Activated CD4-positive, alpha-beta T cell treated with anti-CD3 and anti-CD28 coated beads, Interleukin-2, amount 10 ng/mL, durations not matched to agents 7 days and 5 days (primary cell): ENCODE measurements at regions of chr19 and their contacts with region 1.

Region 1: DNA sequence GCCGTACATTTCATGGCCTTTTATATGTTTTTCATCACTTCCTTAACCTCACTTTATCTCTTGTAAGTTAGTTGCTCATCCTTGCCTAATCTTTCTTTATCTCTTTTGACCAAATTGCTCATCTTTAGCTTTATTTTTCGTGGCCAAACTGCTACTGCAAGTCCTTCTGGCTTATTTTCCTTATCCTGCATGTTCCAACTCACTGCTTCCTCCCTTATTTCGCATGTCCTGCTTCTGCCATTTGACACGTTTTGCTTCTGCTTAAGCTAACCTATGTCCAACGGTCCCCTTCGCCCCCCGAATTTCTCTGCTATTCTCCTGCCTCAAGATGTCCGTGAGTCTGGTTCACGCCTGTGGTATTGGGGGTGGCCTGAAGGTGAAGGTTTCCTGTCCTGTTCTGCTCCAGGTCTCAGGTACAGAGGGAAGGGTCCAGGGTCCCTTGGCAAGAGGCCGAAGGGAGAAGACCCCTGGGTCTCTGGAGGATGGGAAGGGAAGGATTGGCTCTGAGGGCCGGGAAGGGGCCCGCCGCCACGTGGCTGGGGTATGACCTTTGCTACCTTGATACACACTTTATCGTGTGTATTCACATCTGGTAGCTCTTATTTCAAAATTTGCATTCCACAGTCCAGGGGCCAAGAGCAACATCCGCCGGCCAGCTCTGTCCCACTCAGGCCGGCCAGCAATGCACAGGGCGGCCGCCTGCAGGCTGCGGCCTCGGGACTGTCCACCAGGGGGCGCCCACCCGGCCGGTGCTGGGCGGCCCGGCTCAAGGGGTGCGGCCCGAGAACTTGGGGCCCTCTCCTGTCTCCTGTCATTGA is 2.9 kb upstream of the C19orf85 start:
- DNase-seq: peak; percentile 65
- H3K4me3 Mint-ChIP-seq: no peak overlapping the region
- H3K27ac Mint-ChIP-seq: peak overlapping the region; percentile 9
- H3K4me1 Mint-ChIP-seq: peaks cover 7% of the 10 kb centered on the region
- H3K27me3 Mint-ChIP-seq: peaks cover 2% of the 10 kb centered on the region

Region 2: DNA sequence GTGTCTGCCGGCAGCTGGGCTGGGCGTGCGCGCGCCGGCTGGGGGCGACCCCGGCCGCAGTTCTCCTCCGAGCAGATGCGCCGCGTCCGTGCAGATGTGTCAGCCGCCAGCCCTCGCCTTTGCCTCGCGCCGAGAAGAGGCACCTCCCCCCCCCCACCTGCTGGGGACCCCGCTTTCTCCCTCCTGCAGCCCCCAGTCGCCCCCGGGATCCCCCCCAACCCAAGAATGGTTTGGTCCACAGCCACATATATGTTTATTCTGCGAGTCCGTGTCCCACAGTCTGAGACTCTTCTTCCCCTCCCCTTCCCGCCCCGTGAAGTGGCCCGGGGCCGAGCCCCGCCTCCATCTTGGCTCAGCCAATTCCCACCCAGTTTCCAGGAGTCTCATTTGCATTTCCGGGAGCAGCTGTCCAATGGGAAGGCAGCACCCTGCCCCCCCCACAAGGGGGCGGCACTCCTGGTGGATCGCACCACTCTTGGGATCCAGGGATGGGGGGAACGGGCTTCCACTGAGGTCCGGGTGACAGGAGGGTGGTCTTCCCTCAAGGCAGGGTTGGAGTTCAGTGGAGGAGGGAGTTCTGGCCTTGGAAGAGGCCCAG is 14.6 kb before region 1 on chr19:
- CTCF ChIA-PET with region 1: interaction called, 11 read pairs
- POLR2A ChIA-PET with region 1: no interaction called
- DNase-seq: peak; percentile 43
- H3K4me3 Mint-ChIP-seq: no peak overlapping the region
- H3K27ac Mint-ChIP-seq: no peak overlapping the region
- H3K4me1 Mint-ChIP-seq: peaks cover 9% of the 10 kb centered on the region
- H3K27me3 Mint-ChIP-seq: peaks cover 26% of the 10 kb centered on the region

Region 3: DNA sequence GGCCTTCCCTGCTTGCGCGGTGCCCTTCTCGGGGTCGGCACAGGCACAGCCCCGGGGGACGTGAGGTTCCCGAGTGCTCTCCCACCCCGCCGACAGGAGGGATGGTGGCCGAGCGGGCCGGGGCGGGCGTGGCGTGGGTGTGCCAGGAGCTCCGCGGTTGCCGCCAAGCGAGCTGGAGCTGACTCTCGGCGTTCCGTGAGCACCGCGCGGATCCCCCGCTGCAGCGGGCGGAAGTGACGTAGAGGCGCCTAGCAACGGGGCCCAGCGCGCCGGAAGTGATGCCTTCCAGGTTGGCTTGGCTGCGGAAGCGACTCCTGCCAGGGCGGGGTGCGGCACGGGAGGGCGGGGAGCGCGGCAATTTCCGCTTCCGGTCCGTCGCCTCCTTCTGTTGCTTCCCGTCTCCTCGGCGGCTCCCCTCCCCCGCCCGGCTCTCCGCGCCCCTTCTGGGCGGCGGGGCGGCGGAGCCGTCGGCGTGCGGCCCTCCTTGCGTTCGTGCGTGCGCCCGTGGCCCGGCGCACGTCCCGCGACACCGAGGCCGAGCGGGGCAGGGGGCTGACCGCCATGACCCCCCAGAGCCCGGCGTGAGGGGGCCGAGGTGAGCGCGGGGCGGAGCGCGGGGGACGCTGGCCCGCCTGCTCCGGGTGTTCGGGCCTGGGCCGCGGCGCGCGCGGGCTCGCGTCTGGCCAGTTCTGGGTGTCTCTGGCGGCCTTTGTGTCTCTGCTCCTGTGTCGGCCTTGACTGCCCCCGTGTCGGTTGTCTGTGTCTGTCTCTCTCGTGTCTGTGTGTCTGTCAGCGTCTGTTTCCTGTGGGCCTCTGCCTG is 207.6 kb after region 1 on chr19 and contains the start of gene EPN1:
- CTCF ChIA-PET with region 1: no interaction called
- POLR2A ChIA-PET with region 1: no interaction called
- DNase-seq: peak; percentile 98
- H3K4me3 Mint-ChIP-seq: peak within 1 kb of the TSS; percentile 94
- H3K27ac Mint-ChIP-seq: peak within 1 kb of the TSS; percentile 90
- H3K4me1 Mint-ChIP-seq: peaks cover 57% of the 10 kb centered on the region
- H3K27me3 Mint-ChIP-seq: no peaks in the 10 kb centered on the region
- total RNA-seq, gene EPN1: 50.8 to 64.2 TPM

Region 4: GRCh38 chr19:55703790-55704215 is 236.4 kb after region 1 on chr19:
- CTCF ChIA-PET with region 1: no interaction called
- POLR2A ChIA-PET with region 1: no interaction called
- DNase-seq: peak; percentile 39
- H3K4me3 Mint-ChIP-seq: no peak overlapping the region
- H3K27ac Mint-ChIP-seq: no peak overlapping the region
- H3K4me1 Mint-ChIP-seq: peaks cover 9% of the 10 kb centered on the region
- H3K27me3 Mint-ChIP-seq: no peaks in the 10 kb centered on the region